A673 (cell line): ENCODE measurements at regions of chr5 and their contacts with region 1.

Region 1: GRCh38 chr5:6837519-6838110 is 124.4 kb downstream of the TENT4A start:
- DNase-seq: peak; percentile 63
- H3K4me3 ChIP-seq: no peak overlapping the region
- H3K27ac ChIP-seq: no peak overlapping the region
- H3K4me1 ChIP-seq: no peaks in the 10 kb centered on the region
- H3K27me3 ChIP-seq: peaks cover 29% of the 10 kb centered on the region
- CTCF ChIP-seq: peak; percentile 84

Region 2: DNA sequence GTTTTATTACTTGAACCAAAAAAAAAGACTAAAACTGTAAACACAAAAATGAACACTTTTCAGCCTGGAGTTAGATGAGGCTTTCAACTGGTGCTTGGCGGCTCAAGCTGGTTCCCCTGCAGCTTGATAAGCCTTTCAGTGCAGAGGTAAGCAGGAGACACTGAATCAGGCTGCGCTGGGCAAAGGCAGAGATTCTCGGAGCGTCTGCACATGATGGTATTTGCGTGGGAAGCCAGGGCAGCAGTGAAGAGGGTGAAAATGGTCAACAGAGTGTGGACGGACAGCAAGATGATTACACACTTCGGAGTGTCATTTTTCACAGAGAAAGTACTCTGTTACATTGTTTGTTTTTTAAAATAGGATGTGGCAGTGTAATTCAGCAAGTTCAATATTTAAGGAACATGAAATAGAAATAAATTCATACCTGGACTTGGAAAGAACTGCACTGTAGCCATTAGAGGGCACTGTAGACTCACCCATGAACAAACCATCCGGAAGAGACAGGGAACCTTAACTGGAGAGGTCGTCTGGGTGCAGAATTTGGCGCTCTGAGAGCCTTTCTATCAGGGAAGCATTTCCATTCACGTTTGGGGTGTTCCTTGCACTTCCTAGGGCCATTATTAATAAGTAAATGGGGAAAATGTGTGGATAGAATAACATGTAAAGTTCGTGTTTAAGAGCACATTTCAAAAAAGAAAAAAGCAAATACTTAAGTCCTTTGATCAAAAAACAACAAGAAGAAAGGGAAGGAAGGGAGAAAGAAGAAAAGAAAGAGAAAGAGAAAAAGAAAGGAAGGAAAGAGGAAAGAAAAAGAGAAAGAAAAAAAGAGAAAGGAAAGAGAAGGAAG is 1345.3 kb before region 1 on chr5:
- CTCF ChIA-PET with region 1: no interaction called
- POLR2A ChIA-PET with region 1: no interaction called
- intact Hi-C with region 1: loop called (anchors 5 kb)
- DNase-seq: peak; percentile 80
- H3K4me3 ChIP-seq: no peak overlapping the region
- H3K27ac ChIP-seq: no peak overlapping the region
- H3K4me1 ChIP-seq: peaks cover 3% of the 10 kb centered on the region
- H3K27me3 ChIP-seq: peaks cover 6% of the 10 kb centered on the region
- CTCF ChIP-seq: peak; percentile 82

Region 3: DNA sequence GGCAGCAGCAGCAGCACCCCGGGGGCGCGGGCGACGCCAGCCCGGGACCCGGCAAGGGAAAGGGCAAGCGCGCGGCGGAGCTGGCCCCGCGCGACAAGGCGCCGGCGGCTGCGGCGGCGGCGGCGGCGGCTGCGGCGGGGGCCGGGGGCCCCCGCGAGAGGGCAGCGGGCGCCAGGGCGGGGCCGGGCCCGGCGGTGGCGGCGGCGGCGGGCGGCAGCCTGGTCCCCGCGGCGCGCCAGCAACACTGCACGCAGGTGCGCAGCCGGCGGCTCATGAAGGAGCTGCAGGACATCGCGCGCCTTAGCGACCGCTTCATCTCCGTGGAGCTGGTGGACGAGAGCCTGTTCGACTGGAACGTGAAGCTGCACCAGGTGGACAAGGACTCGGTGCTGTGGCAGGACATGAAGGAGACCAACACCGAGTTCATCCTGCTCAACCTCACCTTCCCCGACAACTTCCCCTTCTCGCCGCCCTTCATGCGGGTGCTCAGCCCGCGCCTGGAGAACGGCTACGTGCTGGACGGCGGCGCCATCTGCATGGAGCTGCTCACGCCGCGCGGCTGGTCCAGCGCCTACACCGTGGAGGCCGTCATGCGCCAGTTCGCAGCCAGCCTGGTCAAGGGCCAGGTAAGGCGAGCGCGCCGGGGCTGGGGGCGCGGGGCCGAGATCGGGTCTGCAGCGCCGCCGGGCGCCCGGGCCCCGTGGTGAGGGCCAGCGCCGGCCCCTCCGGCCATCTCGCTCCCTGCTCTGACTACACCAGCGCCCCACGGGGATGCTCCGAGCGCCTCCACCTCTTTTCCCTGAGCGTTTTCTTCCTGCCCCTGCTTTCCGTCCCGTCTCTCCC is 388.8 kb before region 1 on chr5 and contains the start of gene UBE2QL1:
- CTCF ChIA-PET with region 1: no interaction called
- POLR2A ChIA-PET with region 1: no interaction called
- intact Hi-C with region 1: no loop called
- DNase-seq: peak; percentile 25
- H3K4me3 ChIP-seq: peak within 1 kb of the TSS; percentile 50
- H3K27ac ChIP-seq: no peak within 1 kb of the TSS
- H3K4me1 ChIP-seq: no peaks in the 10 kb centered on the region
- H3K27me3 ChIP-seq: peaks cover 40% of the 10 kb centered on the region
- CTCF ChIP-seq: no peak
- total RNA-seq, gene UBE2QL1: 0.74 and 2.6 TPM in 2 replicates